Mammary epithelial cell (primary cell): ENCODE measurements at regions of chr1 and their contacts with region 1.

Region 1: GRCh38 chr1:181324797-181325616 is 158.3 kb upstream of the CACNA1E start:
- DNase-seq: peak; percentile 69
- H3K4me3 ChIP-seq: no peak overlapping the region
- H3K27ac ChIP-seq: no peak overlapping the region
- H3K4me1 ChIP-seq: peaks cover 7% of the 10 kb centered on the region
- H3K27me3 ChIP-seq: no peaks in the 10 kb centered on the region
- CTCF ChIP-seq: no peak

Region 2: GRCh38 chr1:180791806-180792205 is 533.2 kb before region 1 on chr1:
- CTCF ChIA-PET with region 1: no interaction called
- dilution Hi-C with region 1: no loop called
- in situ Hi-C with region 1: no loop called
- intact Hi-C with region 1: no loop called
- DNase-seq: peak; percentile 23
- H3K4me3 ChIP-seq: no peak overlapping the region
- H3K27ac ChIP-seq: no peak overlapping the region
- H3K4me1 ChIP-seq: peaks cover 6% of the 10 kb centered on the region
- H3K27me3 ChIP-seq: no peaks in the 10 kb centered on the region
- CTCF ChIP-seq: no peak

Region 3: GRCh38 chr1:181259026-181259745 is 65.8 kb before region 1 on chr1:
- CTCF ChIA-PET with region 1: no interaction called
- dilution Hi-C with region 1: no loop called
- in situ Hi-C with region 1: no loop called
- intact Hi-C with region 1: no loop called
- DNase-seq: no peak
- H3K4me3 ChIP-seq: no peak overlapping the region
- H3K27ac ChIP-seq: no peak overlapping the region
- H3K4me1 ChIP-seq: peaks cover 11% of the 10 kb centered on the region
- H3K27me3 ChIP-seq: no peaks in the 10 kb centered on the region
- CTCF ChIP-seq: no peak

Region 4: GRCh38 chr1:181347495-181348390 is 22.7 kb after region 1 on chr1:
- CTCF ChIA-PET with region 1: no interaction called
- dilution Hi-C with region 1: no loop called
- in situ Hi-C with region 1: no loop called
- intact Hi-C with region 1: no loop called
- DNase-seq: no peak
- H3K4me3 ChIP-seq: no peak overlapping the region
- H3K27ac ChIP-seq: no peak overlapping the region
- H3K4me1 ChIP-seq: peaks cover 6% of the 10 kb centered on the region
- H3K27me3 ChIP-seq: no peaks in the 10 kb centered on the region
- CTCF ChIP-seq: no peak

Region 5: DNA sequence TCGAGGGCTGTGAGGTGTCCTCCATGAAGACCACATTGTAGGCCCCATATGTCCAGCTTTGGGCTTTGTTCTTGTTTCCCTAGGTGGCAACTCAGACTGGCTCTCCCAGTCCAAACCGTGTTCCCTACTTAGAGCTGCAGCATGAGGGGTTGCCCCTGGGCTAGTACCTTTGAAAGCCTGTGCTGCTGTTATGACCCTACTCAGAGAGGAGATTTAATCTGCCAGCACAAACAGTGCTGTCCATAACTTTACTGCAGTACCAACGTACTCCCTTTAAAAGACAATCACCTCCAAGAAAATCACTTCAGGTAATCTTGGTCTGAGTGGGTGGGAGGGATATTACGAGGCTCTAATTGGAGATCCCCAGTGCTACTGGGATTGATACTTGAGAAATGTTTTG is 79.9 kb after region 1 on chr1:
- CTCF ChIA-PET with region 1: no interaction called
- dilution Hi-C with region 1: loop called (anchors 5 kb)
- in situ Hi-C with region 1: no loop called
- intact Hi-C with region 1: no loop called
- DNase-seq: no peak
- H3K4me3 ChIP-seq: no peak overlapping the region
- H3K27ac ChIP-seq: no peak overlapping the region
- H3K4me1 ChIP-seq: no peaks in the 10 kb centered on the region
- H3K27me3 ChIP-seq: no peaks in the 10 kb centered on the region
- CTCF ChIP-seq: no peak